ENCODE measurements at regions of chr1 and their contacts with region 1.

Region 1: GRCh38 chr1:152459596-152460528 is 45.8 kb upstream of the CRNN start:
- DNase-seq: peak; percentile 63
- H3K4me3 Mint-ChIP-seq: peak overlapping the region; percentile 34
- H3K27ac Mint-ChIP-seq: peak overlapping the region; percentile 76
- H3K4me1 Mint-ChIP-seq: peaks cover 27% of the 10 kb centered on the region
- H3K27me3 Mint-ChIP-seq: peaks cover 10% of the 10 kb centered on the region

Region 2: DNA sequence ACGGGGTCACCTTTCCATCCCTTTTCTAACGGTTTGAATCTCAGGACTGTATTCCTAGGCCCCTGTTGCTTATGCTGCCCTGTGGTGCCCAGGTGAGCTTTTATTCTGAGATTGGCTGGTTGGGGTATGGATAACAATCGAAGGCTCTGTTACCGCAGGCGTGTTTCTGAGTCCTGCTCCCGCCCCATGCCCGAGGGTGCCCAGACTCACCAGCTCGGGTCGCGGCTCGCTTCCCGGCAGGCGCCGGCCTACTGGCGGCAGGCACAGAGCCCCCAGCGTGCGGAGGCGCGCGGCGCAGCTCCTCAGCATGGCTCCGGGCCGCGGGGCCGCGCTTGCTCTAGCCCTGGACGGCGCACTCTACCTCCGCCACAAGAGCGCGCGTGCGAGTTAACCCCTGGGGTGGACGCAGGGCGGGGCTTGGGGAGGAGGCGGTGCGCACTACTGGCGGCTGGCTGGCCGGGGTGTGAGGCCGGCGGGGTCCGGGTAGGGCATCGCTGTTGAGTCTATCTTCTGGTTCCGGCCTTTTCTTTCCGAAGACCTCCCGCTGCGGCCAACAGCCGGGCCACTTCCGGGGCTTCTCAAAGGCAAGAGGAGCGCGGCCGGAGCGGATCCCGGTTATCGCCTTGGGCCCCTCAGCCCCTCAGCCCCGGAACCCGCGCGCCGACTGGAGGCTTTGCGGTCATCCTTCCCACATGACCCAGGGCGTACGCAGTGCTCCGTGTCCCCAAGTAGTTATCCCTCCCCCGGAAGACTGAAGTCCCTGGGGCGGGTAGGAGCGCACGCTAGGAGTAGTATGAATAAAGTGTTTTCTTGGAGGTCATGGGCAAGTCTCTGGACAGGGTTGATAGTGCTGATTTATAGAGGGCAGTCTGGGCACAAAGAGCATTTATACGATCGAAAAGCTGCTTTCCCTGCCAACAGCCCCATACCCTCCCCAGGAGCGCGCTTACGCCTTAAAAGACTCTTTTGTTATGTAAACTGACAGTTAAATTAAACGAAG is 550.4 kb before region 1 on chr1 and contains the start of gene THEM4:
- intact Hi-C with region 1: loop called (anchors 10 kb)
- DNase-seq: peak; percentile 88
- H3K4me3 Mint-ChIP-seq: peak within 1 kb of the TSS; percentile 80
- H3K27ac Mint-ChIP-seq: peak within 1 kb of the TSS; percentile 90
- H3K4me1 Mint-ChIP-seq: peaks cover 29% of the 10 kb centered on the region
- H3K27me3 Mint-ChIP-seq: peaks cover 2% of the 10 kb centered on the region
- total RNA-seq, gene THEM4: 27.2 and 28.0 TPM in 2 replicates

Region 3: GRCh38 chr1:152347116-152347728 is 112.6 kb before region 1 on chr1:
- intact Hi-C with region 1: loop called (anchors 2 kb)
- DNase-seq: peak; percentile 16
- H3K4me3 Mint-ChIP-seq: no peak overlapping the region
- H3K27ac Mint-ChIP-seq: no peak overlapping the region
- H3K4me1 Mint-ChIP-seq: no peaks in the 10 kb centered on the region
- H3K27me3 Mint-ChIP-seq: peaks cover 31% of the 10 kb centered on the region

Region 4: GRCh38 chr1:152996633-152997400 is 537.0 kb after region 1 on chr1:
- intact Hi-C with region 1: no loop called
- DNase-seq: no peak
- H3K4me3 Mint-ChIP-seq: no peak overlapping the region
- H3K27ac Mint-ChIP-seq: no peak overlapping the region
- H3K4me1 Mint-ChIP-seq: no peaks in the 10 kb centered on the region
- H3K27me3 Mint-ChIP-seq: no peaks in the 10 kb centered on the region

Measured in activated T-helper 2 cell treated with anti-CD3 and anti-CD28 coated beads, Interferon-gamma antibody, Interleukin-2, Interleukin-4, amounts not matched to agents 10 μg/mL and 5 μg/mL and 100 μg/mL, durations not matched to agents 14 hours and 24 hours and 36 hours (primary cell).